Endothelial cell of umbilical vein (primary cell): ENCODE measurements at regions of chr15 and their contacts with region 1.

Region 1: GRCh38 chr15:84929744-84930371 is 45.4 kb downstream of the SLC28A1 start:
- DNase-seq: no peak
- H3K4me3 ChIP-seq: no peak overlapping the region
- H3K27ac ChIP-seq: no peak overlapping the region
- H3K4me1 ChIP-seq: no peaks in the 10 kb centered on the region
- H3K27me3 ChIP-seq: no peaks in the 10 kb centered on the region
- CTCF ChIP-seq: no peak
- POLR2A ChIP-seq: no peak

Region 2: DNA sequence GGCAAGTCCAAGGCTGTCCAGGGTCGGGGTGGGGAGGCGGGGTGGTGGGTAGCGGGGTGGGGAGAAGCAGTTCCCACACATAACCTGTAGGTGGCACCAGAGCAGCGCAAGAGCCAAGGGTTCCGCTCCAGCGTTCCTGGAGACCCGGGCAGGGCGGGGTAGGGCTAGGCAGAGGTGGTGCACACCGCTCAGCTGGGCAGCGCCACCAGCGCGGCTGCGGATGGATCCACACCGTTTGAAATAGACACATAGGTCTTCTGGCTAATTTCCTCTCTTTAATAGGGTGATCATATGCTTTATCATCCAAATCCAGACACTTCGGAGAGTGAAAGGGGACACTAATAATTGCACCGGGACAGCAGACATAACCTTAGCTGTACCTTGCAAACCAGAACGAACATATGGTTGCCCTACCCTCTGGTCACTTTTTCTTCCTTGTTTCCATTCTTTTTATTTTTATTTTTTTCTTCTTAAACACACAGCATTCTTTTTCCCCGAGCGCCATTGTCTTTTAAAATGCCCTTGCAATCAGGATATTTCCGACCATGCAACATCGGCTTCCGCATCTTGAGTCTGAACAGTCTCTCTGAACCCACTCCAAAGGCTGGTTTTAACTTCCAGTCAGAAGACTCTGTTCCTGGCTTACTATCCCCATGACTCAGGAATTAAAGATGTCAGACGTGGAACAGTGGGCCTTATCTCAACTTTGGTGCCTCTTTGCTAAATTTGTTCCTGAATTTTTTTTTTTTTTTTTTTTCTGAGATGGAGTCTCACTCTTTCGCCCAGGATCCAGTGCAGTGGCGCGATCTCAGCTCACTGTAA is 341.6 kb before region 1 on chr15:
- CTCF ChIA-PET with region 1: interaction called, 4 read pairs
- POLR2A ChIA-PET with region 1: no interaction called
- dilution Hi-C with region 1: no loop called
- intact Hi-C with region 1: loop called (anchors 1 kb)
- DNase-seq: peak; percentile 72
- H3K4me3 ChIP-seq: peak overlapping the region in 2 of 3 experiments; percentile 24 to 58
- H3K27ac ChIP-seq: no peak overlapping the region
- H3K4me1 ChIP-seq: peaks cover 5% of the 10 kb centered on the region
- H3K27me3 ChIP-seq: peaks cover 0 to 4% of the 10 kb centered on the region in 2 experiments
- CTCF ChIP-seq: peak; percentile 43 to 82
- POLR2A ChIP-seq: no peak

Region 3: GRCh38 chr15:84658080-84658787 is 271.6 kb before region 1 on chr15 and contains the start of gene NMB:
- CTCF ChIA-PET with region 1: interaction called, 35 read pairs
- POLR2A ChIA-PET with region 1: interaction called, 3 read pairs
- dilution Hi-C with region 1: no loop called
- intact Hi-C with region 1: loop called (anchors 1 kb)
- DNase-seq: peak; percentile 75
- H3K4me3 ChIP-seq: peak within 1 kb of the TSS; percentile 36 to 50 (median 47)
- H3K27ac ChIP-seq: peak within 1 kb of the TSS; percentile 49
- H3K4me1 ChIP-seq: peaks cover 23% of the 10 kb centered on the region
- H3K27me3 ChIP-seq: no peaks in the 10 kb centered on the region
- CTCF ChIP-seq: peak; percentile 41 to 56
- POLR2A ChIP-seq: no peak
- total RNA-seq, gene NMB: 9.6 and 9.8 TPM in 2 replicates

Region 4: DNA sequence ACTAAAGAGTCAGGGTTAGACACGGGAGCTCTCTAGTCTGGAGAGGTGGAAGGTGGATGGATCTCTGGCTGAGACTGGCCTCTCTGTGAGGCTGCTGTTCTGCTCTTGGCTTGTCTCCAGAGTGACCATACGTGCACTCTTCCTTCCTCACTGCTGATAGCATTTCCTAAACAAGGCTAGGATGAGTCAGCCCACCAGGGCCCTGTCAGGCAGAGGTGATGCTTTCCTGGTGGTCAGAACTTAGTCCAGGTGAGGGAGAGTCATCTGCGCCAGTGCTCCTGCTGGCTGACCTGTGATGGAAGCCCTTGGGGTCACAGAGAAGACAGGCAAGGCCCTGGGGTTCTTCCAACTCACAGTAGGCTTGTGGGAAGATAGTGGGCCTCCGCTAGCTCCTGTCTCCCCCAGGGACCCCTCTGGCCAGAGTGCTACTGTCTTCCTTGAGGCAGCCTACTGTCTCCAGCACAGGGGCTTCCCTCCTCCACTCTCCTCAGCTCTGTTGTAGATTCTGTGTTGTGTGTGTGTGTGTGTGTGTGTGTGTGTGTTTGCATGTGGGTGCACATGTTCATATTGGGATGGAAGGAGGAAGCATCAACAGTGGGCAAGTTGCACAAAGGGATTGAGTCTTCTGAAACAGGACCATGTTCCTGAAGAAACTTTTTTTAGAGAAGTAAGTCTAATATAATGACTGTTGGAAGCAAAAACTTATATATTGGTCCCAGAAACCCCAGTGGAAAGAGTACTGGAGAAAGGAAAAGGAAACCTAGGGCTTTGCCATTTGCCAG is 96.2 kb before region 1 on chr15:
- CTCF ChIA-PET with region 1: interaction called, 11 read pairs
- POLR2A ChIA-PET with region 1: interaction called, 6 read pairs
- dilution Hi-C with region 1: no loop called
- intact Hi-C with region 1: no loop called
- DNase-seq: peak; percentile 53
- H3K4me3 ChIP-seq: no peak overlapping the region
- H3K27ac ChIP-seq: no peak overlapping the region
- H3K4me1 ChIP-seq: peaks cover 13% of the 10 kb centered on the region
- H3K27me3 ChIP-seq: no peaks in the 10 kb centered on the region
- CTCF ChIP-seq: no peak
- POLR2A ChIP-seq: no peak

Region 5: DNA sequence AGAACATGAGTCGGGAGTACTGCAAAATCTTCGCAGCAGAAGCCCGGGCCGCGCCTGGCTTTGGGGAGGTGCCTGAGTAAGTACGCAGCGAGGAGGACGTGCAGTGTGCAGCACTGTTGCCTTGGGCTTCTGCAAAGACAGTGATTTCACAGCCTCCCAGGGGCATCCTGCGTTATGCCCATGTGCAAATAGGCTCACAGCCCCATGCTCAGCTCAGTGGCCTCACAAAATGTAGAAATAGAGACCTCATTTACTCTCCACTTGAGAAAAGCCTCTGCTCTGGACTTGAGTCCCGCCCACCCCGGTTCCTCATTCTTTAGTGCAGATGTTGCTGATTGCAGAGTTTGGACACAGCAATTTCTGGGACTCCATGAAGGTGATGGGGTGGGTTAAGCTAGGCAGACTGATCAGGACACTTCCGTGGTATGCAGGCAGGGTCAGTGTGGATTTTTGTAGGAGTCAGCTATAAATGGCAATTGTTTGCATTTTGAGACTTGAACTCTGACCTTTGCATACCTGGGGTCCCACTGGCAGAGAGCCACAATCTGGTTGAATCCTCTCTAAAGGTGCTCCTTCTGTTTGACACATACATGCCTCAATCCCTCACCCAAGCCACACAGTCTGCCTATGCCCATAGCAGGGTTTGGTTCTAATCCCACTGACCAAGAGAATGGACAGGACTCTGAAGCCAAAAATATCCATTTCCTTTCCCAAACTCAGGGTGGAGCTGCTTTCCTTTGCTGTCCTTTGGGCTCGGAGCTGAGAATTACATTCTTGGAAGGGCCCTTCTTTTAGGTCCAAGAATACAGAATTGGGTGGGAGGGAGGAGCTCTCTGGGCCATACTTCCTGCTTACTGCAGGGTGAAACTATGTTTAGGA is 66.1 kb before region 1 on chr15:
- CTCF ChIA-PET with region 1: interaction called, 15 read pairs
- POLR2A ChIA-PET with region 1: no interaction called
- dilution Hi-C with region 1: no loop called
- intact Hi-C with region 1: no loop called
- DNase-seq: no peak
- H3K4me3 ChIP-seq: no peak overlapping the region
- H3K27ac ChIP-seq: no peak overlapping the region
- H3K4me1 ChIP-seq: no peaks in the 10 kb centered on the region
- H3K27me3 ChIP-seq: no peaks in the 10 kb centered on the region
- CTCF ChIP-seq: no peak
- POLR2A ChIP-seq: no peak

Region 6: DNA sequence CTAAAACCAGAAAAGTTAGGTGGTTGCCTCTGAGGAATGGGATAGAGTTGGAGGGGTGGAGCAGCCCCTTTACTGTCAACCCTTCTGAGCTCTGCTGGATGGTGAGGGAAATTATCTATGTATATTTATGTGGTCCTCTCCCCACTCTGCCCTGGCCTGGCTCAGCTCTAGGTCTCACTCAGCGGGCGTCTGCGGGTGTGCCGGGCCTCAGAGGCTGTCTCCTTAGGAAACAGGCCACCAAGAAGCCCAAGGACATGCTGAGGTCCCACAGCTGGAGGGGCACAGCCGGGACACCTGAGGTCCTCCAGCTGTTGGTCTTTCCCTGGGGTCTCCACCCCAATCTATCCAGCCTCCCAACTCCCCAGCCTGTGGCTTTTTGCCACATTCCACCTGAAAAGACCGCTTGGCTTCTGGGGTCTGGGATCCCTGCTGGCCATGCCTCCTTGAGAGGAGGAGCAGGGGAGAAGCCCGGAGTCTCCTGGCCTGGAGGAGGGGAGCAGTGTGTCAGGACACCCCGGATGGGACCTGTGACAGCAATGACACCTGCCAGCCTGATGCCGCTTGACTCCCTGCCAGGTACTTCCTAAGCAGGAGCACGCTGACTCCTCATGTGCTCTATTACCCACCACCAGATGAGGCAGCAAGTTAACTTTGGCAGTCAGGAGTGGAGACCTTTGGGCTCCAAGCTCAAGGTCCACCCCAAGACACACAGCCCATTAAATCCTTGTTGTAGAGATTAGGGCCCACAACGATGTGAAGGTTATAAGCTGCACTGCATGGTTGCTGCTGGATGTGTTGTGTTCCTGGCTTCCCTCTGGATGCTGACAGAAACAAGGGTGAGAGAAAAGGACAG is 45.7 kb before region 1 on chr15 and contains the start of gene SLC28A1:
- CTCF ChIA-PET with region 1: interaction called, 21 read pairs
- POLR2A ChIA-PET with region 1: no interaction called
- dilution Hi-C with region 1: no loop called
- intact Hi-C with region 1: no loop called
- DNase-seq: no peak
- H3K4me3 ChIP-seq: no peak within 1 kb of the TSS
- H3K27ac ChIP-seq: no peak within 1 kb of the TSS
- H3K4me1 ChIP-seq: no peaks in the 10 kb centered on the region
- H3K27me3 ChIP-seq: peaks cover 2 to 4% of the 10 kb centered on the region in 2 experiments
- CTCF ChIP-seq: no peak
- POLR2A ChIP-seq: no peak
- total RNA-seq, gene SLC28A1: not detected in 2 replicates